Breast epithelium (tissue), 4 donors: ENCODE measurements at regions of chr2 and their contacts with region 1.

Region 1: GRCh38 chr2:68155618-68156017 is 2.1 kb upstream of the PNO1 start:
- DNase-seq: no peak
- H3K4me3 ChIP-seq: no peak overlapping the region
- H3K27ac ChIP-seq: no peak overlapping the region
- H3K4me1 ChIP-seq: peaks cover 0 to 25% of the 10 kb centered on the region in 2 donors
- H3K27me3 ChIP-seq: no peaks in the 10 kb centered on the region
- CTCF ChIP-seq: no peak
- POLR2A ChIP-seq: no peak

Region 2: GRCh38 chr2:68169297-68169696 is 13.7 kb after region 1 on chr2:
- intact Hi-C with region 1: loop called (anchors 1 kb)
- DNase-seq: no peak
- H3K4me3 ChIP-seq: no peak overlapping the region
- H3K27ac ChIP-seq: no peak overlapping the region
- H3K4me1 ChIP-seq: no peaks in the 10 kb centered on the region
- H3K27me3 ChIP-seq: no peaks in the 10 kb centered on the region
- CTCF ChIP-seq: no peak
- POLR2A ChIP-seq: no peak

Region 3: DNA sequence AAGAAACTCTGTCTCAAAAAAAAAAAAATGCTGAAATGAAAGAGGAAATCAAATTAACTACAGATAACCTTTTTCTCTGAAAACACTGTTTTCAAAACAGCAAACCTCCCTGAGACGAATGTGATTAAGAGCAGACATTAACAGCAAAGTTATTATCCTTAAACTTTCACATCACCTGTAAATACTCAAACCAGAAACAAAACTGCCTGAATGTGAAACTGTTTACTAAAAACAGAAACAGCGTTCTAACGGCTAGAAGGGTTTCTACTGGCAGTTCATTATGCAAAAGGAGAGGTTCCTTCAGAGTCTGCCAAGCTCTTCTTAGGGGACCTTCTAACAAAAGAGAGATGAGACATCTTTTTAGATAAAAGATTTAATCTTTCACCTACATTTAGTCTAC is 48.0 kb after region 1 on chr2:
- intact Hi-C with region 1: no loop called
- DNase-seq: no peak
- H3K4me3 ChIP-seq: no peak overlapping the region
- H3K27ac ChIP-seq: peak overlapping the region; percentile 1 to 13
- H3K4me1 ChIP-seq: no peaks in the 10 kb centered on the region
- H3K27me3 ChIP-seq: no peaks in the 10 kb centered on the region
- CTCF ChIP-seq: no peak
- POLR2A ChIP-seq: no peak